HepG2 (cell line): ENCODE measurements at regions of chr11 and their contacts with region 1.

Region 1: DNA sequence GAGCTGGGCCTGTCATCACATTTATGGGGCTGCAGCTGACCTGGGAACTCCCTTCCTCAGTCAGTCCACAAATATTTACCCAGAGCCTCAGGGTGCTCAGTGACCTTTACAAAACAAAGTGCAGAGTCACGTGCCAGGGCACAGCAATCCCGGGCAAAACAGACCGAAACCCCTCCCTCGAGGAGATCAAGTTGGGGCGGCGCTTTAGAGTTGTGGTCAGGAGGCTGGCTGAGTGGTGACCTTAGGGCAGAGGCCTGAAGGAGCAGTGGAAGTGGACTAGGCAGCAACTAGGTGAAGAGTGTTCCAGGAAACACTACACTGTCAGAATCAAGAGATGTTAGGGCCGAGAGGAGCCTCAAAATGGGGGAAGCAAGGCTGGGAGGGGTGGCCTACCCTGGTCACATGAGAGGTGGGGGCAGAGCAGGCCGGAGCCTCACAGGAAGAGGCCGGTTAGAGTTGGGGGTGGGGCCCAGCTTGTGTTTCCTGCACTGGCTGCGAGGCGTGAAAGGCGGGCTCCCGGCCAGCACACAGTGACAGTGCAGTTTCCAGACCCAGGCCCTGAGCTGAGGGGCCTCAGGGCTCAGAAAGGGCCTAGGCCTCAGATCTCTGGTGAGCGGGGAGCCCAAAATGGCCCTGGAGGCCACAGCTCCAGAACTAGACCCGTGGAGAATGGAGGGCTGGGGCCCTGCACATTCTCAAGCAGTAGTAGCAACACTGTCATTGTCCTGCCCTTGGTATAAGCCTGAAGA is 3.7 kb upstream of the NEAT1 start:
- DNase-seq: peak; percentile 99
- ATAC-seq: peak; percentile 52
- H3K4me3 ChIP-seq: peak overlapping the region; percentile 66 to 87 (median 70)
- H3K27ac ChIP-seq: peak overlapping the region; percentile 100
- H3K4me1 ChIP-seq: peaks cover 67% of the 10 kb centered on the region
- H3K27me3 ChIP-seq: no peaks in the 10 kb centered on the region; a peak in 1 of 5 replicates
- CTCF ChIP-seq: no peak
- EP300 ChIP-seq: peak; percentile 14 to 87; a peak in 3 of 4 replicates
- POLR2A ChIP-seq: peak in 1 of 2 experiments; percentile 92; a peak in 2 of 4 replicates
- RAD21 ChIP-seq: peak; percentile 56

Region 2: DNA sequence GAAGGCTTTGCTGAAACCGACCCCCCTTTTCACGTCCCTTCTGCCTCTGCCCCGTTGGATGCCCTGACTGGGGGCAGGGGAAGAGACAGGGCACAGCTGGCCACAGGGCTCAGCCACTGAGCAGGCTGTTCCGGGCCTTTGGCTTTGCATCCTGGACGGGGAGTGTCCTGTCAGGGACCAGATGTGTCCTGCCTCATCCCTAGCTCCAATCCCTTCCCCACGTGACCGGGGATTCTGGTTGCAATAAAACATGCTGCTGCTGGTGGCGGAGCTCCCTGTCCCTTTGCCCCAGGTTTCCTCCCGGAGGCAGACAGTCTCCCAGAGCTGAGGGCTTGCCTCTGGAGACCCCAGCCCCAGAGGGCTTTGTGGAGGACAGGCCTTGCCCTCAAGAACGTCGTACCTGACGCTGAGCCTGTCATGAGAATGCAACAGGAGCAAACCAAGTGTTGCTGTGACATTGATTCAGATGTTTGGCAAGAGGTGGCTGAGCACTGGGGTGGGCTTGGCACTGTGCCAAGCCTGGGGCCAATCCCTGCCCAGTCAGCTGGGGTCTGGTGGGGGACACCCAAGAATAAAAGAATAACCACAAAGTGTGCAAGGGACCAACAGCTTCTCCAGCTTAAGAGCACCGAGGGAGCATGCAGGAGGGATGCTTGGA is 96.9 kb before region 1 on chr11:
- CTCF ChIA-PET with region 1: no interaction called
- POLR2A ChIA-PET with region 1: no interaction called
- in situ Hi-C with region 1: no loop called
- intact Hi-C with region 1: no loop called
- DNase-seq: no peak
- ATAC-seq: no peak
- H3K4me3 ChIP-seq: no peak overlapping the region
- H3K27ac ChIP-seq: no peak overlapping the region
- H3K4me1 ChIP-seq: peaks cover 14% of the 10 kb centered on the region
- H3K27me3 ChIP-seq: no peaks in the 10 kb centered on the region
- CTCF ChIP-seq: no peak
- EP300 ChIP-seq: no peak
- POLR2A ChIP-seq: no peak
- RAD21 ChIP-seq: no peak

Region 3: GRCh38 chr11:65366340-65366773 is 52.5 kb before region 1 on chr11:
- CTCF ChIA-PET with region 1: interaction called, 9 read pairs
- POLR2A ChIA-PET with region 1: interaction called, 39 read pairs
- in situ Hi-C with region 1: no loop called
- intact Hi-C with region 1: loop called (anchors 2 kb)
- DNase-seq: peak; percentile 84
- ATAC-seq: peak; percentile 81
- H3K4me3 ChIP-seq: peak overlapping the region in 2 of 3 experiments; percentile 15 to 50; a peak in 2 of 6 replicates
- H3K27ac ChIP-seq: no peak overlapping the region
- H3K4me1 ChIP-seq: peaks cover 48% of the 10 kb centered on the region
- H3K27me3 ChIP-seq: no peaks in the 10 kb centered on the region
- CTCF ChIP-seq: peak; percentile 88
- EP300 ChIP-seq: no peak
- POLR2A ChIP-seq: no peak
- RAD21 ChIP-seq: peak; percentile 87

Region 4: GRCh38 chr11:65403607-65404121 is 15.2 kb before region 1 on chr11:
- CTCF ChIA-PET with region 1: no interaction called
- POLR2A ChIA-PET with region 1: interaction called, 98 read pairs
- in situ Hi-C with region 1: no loop called
- intact Hi-C with region 1: no loop called
- DNase-seq: no peak
- ATAC-seq: no peak
- H3K4me3 ChIP-seq: no peak overlapping the region
- H3K27ac ChIP-seq: no peak overlapping the region
- H3K4me1 ChIP-seq: peaks cover 19% of the 10 kb centered on the region
- H3K27me3 ChIP-seq: no peaks in the 10 kb centered on the region
- CTCF ChIP-seq: no peak
- EP300 ChIP-seq: no peak
- POLR2A ChIP-seq: no peak
- RAD21 ChIP-seq: no peak

Region 5: GRCh38 chr11:65471410-65471762 is 52.5 kb after region 1 on chr11:
- CTCF ChIA-PET with region 1: interaction called, 13 read pairs
- POLR2A ChIA-PET with region 1: interaction called, 232 read pairs
- in situ Hi-C with region 1: no loop called
- intact Hi-C with region 1: loop called (anchors 2 kb)
- DNase-seq: peak; percentile 73
- ATAC-seq: peak; percentile 92
- H3K4me3 ChIP-seq: peak overlapping the region; percentile 31 to 63 (median 33); a peak in 5 of 6 replicates
- H3K27ac ChIP-seq: no peak overlapping the region
- H3K4me1 ChIP-seq: peaks cover 57% of the 10 kb centered on the region
- H3K27me3 ChIP-seq: no peaks in the 10 kb centered on the region; a peak in 1 of 5 replicates
- CTCF ChIP-seq: peak; percentile 90
- EP300 ChIP-seq: no peak
- POLR2A ChIP-seq: no peak; a peak in 1 of 4 replicates
- RAD21 ChIP-seq: peak; percentile 86

Region 6: GRCh38 chr11:65497141-65498041 is 78.5 kb after region 1 on chr11:
- CTCF ChIA-PET with region 1: no interaction called
- POLR2A ChIA-PET with region 1: interaction called, 952 read pairs
- in situ Hi-C with region 1: loop called (anchors 5 kb)
- intact Hi-C with region 1: loop called (anchors 2 kb)
- DNase-seq: peak; percentile 95
- ATAC-seq: peak; percentile 88
- H3K4me3 ChIP-seq: peak overlapping the region; percentile 85 to 93 (median 89)
- H3K27ac ChIP-seq: peak overlapping the region; percentile 100
- H3K4me1 ChIP-seq: peaks cover 37% of the 10 kb centered on the region
- H3K27me3 ChIP-seq: no peaks in the 10 kb centered on the region; a peak in 2 of 5 replicates
- CTCF ChIP-seq: peak; percentile 36
- EP300 ChIP-seq: peak; percentile 62 to 85; a peak in 3 of 4 replicates
- POLR2A ChIP-seq: peak; percentile 60 to 84
- RAD21 ChIP-seq: peak; percentile 76

Region 7: GRCh38 chr11:65524741-65525545 is 106.1 kb after region 1 on chr11 and contains the start of gene SCYL1:
- CTCF ChIA-PET with region 1: no interaction called
- POLR2A ChIA-PET with region 1: interaction called, 20 read pairs
- in situ Hi-C with region 1: no loop called
- intact Hi-C with region 1: no loop called
- DNase-seq: no peak
- ATAC-seq: peak; percentile 25
- H3K4me3 ChIP-seq: peak within 1 kb of the TSS; percentile 93 to 97 (median 96)
- H3K27ac ChIP-seq: peak within 1 kb of the TSS; percentile 86
- H3K4me1 ChIP-seq: peaks cover 72% of the 10 kb centered on the region
- H3K27me3 ChIP-seq: no peaks in the 10 kb centered on the region; a peak in 1 of 5 replicates
- CTCF ChIP-seq: no peak
- EP300 ChIP-seq: no peak
- POLR2A ChIP-seq: peak; percentile 55 to 62; a peak in 3 of 4 replicates
- RAD21 ChIP-seq: peak; percentile 47; the same call in 1 of the 2 replicates
- total RNA-seq, gene SCYL1: 61.7 and 65.9 TPM in 2 replicates

Region 8: DNA sequence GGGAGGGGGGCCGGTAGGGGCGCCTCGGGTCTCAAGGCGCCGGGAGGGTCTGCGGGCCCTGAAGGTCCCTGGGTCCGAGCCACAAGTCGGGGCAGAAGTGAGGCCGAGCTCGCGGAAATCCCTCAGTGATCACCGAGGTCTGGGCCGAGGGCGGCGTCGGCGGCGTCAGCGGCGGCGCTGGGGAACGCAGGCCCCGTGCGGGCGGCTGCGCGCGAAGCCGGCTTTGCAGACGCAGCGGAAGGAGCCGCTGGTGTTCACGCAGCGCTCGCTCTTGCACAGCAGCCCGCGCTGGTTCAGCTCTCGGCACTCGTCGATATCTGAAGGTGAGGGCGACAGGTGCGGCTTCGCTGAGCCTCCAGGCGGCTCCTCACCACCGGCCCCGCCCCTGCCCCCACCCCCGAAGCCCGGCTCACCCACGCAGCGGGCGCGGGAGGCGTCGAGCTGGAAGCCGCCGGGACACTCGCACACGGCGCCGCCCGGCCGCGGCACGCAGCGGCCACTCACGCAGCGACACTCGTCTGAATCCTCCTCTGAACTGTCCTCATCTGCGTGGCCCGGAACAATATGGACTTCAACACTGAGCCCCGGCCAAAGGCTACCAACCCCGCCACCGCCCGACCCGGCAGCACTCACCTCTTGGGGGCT is 120.2 kb after region 1 on chr11:
- CTCF ChIA-PET with region 1: no interaction called
- POLR2A ChIA-PET with region 1: no interaction called
- in situ Hi-C with region 1: no loop called
- intact Hi-C with region 1: no loop called
- DNase-seq: no peak
- ATAC-seq: no peak
- H3K4me3 ChIP-seq: no peak overlapping the region
- H3K27ac ChIP-seq: no peak overlapping the region
- H3K4me1 ChIP-seq: no peaks in the 10 kb centered on the region
- H3K27me3 ChIP-seq: no peaks in the 10 kb centered on the region
- CTCF ChIP-seq: no peak
- EP300 ChIP-seq: no peak
- POLR2A ChIP-seq: no peak; a peak in 1 of 4 replicates
- RAD21 ChIP-seq: no peak

Region 9: GRCh38 chr11:65588199-65589054 is 169.5 kb after region 1 on chr11:
- CTCF ChIA-PET with region 1: no interaction called
- POLR2A ChIA-PET with region 1: no interaction called
- in situ Hi-C with region 1: no loop called
- intact Hi-C with region 1: no loop called
- DNase-seq: peak; percentile 73
- ATAC-seq: peak; percentile 90
- H3K4me3 ChIP-seq: no peak overlapping the region
- H3K27ac ChIP-seq: no peak overlapping the region
- H3K4me1 ChIP-seq: peaks cover 25% of the 10 kb centered on the region
- H3K27me3 ChIP-seq: no peaks in the 10 kb centered on the region
- CTCF ChIP-seq: peak; percentile 86
- EP300 ChIP-seq: no peak
- POLR2A ChIP-seq: no peak
- RAD21 ChIP-seq: peak; percentile 84